ENCODE measurements at regions of chr7 and their contacts with region 1.

Region 1: GRCh38 chr7:54758702-54759592 is at the start of gene SEC61G:
- DNase-seq: peak; percentile 97
- H3K4me3 Mint-ChIP-seq: peak within 1 kb of the TSS; percentile 94
- H3K27ac Mint-ChIP-seq: peak within 1 kb of the TSS; percentile 96
- H3K4me1 Mint-ChIP-seq: peaks cover 5% of the 10 kb centered on the region
- H3K27me3 Mint-ChIP-seq: no peaks in the 10 kb centered on the region
- CTCF ChIP-seq: no peak
- total RNA-seq, gene SEC61G: 246 and 490 TPM in 2 replicates

Region 2: GRCh38 chr7:54743580-54743979 is 15.4 kb before region 1 on chr7:
- CTCF ChIA-PET with region 1: no interaction called
- POLR2A ChIA-PET with region 1: interaction called, 11 read pairs
- intact Hi-C with region 1: no loop called
- DNase-seq: no peak
- H3K4me3 Mint-ChIP-seq: no peak overlapping the region
- H3K27ac Mint-ChIP-seq: no peak overlapping the region
- H3K4me1 Mint-ChIP-seq: no peaks in the 10 kb centered on the region
- H3K27me3 Mint-ChIP-seq: no peaks in the 10 kb centered on the region
- CTCF ChIP-seq: no peak

Region 3: DNA sequence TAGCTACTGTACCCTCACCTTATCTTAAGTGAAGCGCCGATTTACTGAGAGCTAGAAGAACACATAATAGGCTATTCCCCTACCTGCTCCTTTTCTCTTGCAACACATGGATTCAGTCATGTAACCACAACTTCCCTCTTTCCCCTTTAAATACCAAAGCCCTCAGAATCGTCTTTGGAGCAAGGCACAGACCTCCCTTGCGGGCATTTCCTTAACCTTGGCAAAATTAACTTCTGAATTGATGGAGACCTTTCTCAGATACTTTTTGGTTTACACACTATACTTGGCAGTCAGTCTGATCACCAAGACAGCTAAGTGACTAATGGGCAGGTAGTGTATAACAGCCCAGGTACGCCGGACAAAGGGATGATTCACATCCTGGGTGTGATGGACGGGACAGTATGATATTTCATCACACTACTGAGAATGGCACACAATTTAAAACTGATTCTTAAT is 72.7 kb after region 1 on chr7:
- CTCF ChIA-PET with region 1: no interaction called
- POLR2A ChIA-PET with region 1: interaction called, 11 read pairs
- intact Hi-C with region 1: no loop called
- DNase-seq: peak; percentile 96
- H3K4me3 Mint-ChIP-seq: peak overlapping the region; percentile 28
- H3K27ac Mint-ChIP-seq: peak overlapping the region; percentile 61
- H3K4me1 Mint-ChIP-seq: peaks cover 21% of the 10 kb centered on the region
- H3K27me3 Mint-ChIP-seq: no peaks in the 10 kb centered on the region
- CTCF ChIP-seq: no peak

Region 4: GRCh38 chr7:54860003-54860775 is 101.2 kb after region 1 on chr7:
- CTCF ChIA-PET with region 1: no interaction called
- POLR2A ChIA-PET with region 1: no interaction called
- intact Hi-C with region 1: no loop called
- DNase-seq: no peak
- H3K4me3 Mint-ChIP-seq: no peak overlapping the region
- H3K27ac Mint-ChIP-seq: no peak overlapping the region
- H3K4me1 Mint-ChIP-seq: peaks cover 27% of the 10 kb centered on the region
- H3K27me3 Mint-ChIP-seq: no peaks in the 10 kb centered on the region
- CTCF ChIP-seq: no peak

Region 5: DNA sequence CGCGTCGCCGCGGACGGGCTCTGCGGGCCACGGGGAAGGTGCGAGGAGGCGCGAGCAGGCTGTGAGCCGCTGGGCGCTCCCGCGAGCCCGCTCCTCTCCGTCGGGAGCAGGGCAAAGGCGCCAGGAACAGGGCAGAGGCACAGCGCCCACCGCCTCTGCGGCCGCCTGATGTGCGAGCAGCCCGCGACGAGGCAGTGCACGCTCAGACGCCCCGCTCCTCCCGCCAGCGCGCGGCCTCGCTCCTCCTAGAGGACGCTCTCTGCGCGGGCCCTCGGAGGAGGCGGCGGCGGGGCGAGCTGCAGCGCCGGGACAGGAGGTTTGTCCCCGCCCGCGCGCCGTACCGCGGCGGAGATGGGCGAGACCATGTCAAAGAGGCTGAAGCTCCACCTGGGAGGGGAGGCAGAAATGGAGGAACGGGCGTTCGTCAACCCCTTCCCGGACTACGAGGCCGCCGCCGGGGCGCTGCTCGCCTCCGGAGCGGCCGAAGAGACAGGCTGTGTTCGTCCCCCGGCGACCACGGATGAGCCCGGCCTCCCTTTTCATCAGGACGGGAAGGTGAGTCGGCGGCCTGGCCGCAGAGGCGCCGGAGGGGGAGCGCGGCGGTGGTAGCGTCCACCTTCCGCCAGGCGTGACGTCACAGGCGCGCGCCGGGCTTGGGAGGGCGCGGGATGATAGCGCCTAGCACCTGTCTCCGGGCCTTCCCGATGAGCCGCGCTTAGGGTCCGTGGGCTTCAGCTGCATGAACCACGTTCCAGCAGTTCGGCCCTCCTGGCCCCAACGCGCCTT is 606.9 kb after region 1 on chr7:
- CTCF ChIA-PET with region 1: no interaction called
- POLR2A ChIA-PET with region 1: interaction called, 13 read pairs
- intact Hi-C with region 1: no loop called
- DNase-seq: peak; percentile 96
- H3K4me3 Mint-ChIP-seq: peak overlapping the region; percentile 92
- H3K27ac Mint-ChIP-seq: peak overlapping the region; percentile 100
- H3K4me1 Mint-ChIP-seq: peaks cover 6% of the 10 kb centered on the region
- H3K27me3 Mint-ChIP-seq: no peaks in the 10 kb centered on the region
- CTCF ChIP-seq: peak; percentile 10

Region 6: GRCh38 chr7:55415173-55415778 is 656.3 kb after region 1 on chr7:
- CTCF ChIA-PET with region 1: no interaction called
- POLR2A ChIA-PET with region 1: no interaction called
- intact Hi-C with region 1: loop called (anchors 5 kb)
- DNase-seq: peak; percentile 81
- H3K4me3 Mint-ChIP-seq: no peak overlapping the region
- H3K27ac Mint-ChIP-seq: no peak overlapping the region
- H3K4me1 Mint-ChIP-seq: no peaks in the 10 kb centered on the region
- H3K27me3 Mint-ChIP-seq: no peaks in the 10 kb centered on the region
- CTCF ChIP-seq: peak; percentile 77

Measured in MCF 10A (cell line).